ENCODE measurements at regions of chr13 and their contacts with region 1.

Region 1: GRCh38 chr13:111474136-111475002 is 153.9 kb downstream of the TEX29 start:
- DNase-seq: peak in 2 of 4 donors; percentile 34 to 54
- ATAC-seq: peak; percentile 84
- H3K4me3 ChIP-seq: no peak overlapping the region
- H3K27ac ChIP-seq: no peak overlapping the region
- H3K4me1 ChIP-seq: no peaks in the 10 kb centered on the region
- H3K27me3 ChIP-seq: peaks cover 0 to 23% of the 10 kb centered on the region in 2 donors
- CTCF ChIP-seq: peak; percentile 27 to 38

Region 2: GRCh38 chr13:111630406-111630805 is 156.0 kb after region 1 on chr13:
- intact Hi-C with region 1: no loop called
- DNase-seq: no peak
- ATAC-seq: no peak
- H3K4me3 ChIP-seq: no peak overlapping the region
- H3K27ac ChIP-seq: no peak overlapping the region
- H3K4me1 ChIP-seq: no peaks in the 10 kb centered on the region
- H3K27me3 ChIP-seq: peaks cover 0 to 43% of the 10 kb centered on the region in 2 donors
- CTCF ChIP-seq: no peak

Region 3: DNA sequence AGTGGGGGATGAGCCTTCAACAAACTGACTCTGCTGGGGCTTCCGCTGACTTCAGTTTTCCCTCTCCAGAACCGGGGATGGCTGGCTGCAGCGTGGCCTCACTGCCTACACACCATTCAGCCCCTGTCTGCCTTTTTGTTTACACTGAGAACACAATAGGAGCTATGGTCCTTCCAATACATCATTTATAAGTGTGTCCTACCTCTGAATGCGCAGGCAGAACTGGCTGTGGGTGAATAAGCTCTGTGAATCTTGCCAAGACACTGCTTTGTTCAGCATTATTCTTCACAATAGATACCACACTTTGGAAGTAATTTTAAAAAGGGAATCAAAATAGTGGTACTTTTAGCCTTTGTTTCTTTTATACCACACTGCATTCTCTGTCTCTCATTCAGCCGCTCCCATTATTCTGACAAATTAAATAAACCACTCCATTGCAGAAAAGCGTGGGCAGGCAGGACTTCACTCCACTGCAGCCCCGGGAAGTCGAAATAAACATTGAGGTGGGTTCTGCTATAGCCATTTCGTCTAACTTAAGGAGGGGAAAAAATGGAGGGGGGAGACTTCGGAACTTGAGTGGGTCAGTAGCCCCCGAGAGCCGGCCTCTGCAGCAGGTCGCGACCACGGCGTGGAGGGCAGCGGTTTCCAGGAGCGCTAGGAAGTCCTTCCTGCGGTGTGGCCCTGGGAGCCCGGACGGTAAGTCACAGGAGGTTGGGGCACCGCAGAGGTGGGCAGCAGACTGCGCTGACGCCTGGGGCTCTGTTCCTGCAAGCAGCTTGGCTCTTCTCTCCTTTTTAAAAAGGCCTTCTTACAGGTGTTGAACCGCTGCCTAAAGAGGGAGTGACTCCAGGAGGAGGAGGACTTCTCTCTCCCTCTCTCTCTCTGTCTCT is 497.8 kb after region 1 on chr13:
- intact Hi-C with region 1: no loop called
- DNase-seq: no peak
- ATAC-seq: no peak
- H3K4me3 ChIP-seq: no peak overlapping the region
- H3K27ac ChIP-seq: no peak overlapping the region
- H3K4me1 ChIP-seq: no peaks in the 10 kb centered on the region
- H3K27me3 ChIP-seq: peaks cover 20 to 86% of the 10 kb centered on the region in 2 donors
- CTCF ChIP-seq: no peak

Region 4: DNA sequence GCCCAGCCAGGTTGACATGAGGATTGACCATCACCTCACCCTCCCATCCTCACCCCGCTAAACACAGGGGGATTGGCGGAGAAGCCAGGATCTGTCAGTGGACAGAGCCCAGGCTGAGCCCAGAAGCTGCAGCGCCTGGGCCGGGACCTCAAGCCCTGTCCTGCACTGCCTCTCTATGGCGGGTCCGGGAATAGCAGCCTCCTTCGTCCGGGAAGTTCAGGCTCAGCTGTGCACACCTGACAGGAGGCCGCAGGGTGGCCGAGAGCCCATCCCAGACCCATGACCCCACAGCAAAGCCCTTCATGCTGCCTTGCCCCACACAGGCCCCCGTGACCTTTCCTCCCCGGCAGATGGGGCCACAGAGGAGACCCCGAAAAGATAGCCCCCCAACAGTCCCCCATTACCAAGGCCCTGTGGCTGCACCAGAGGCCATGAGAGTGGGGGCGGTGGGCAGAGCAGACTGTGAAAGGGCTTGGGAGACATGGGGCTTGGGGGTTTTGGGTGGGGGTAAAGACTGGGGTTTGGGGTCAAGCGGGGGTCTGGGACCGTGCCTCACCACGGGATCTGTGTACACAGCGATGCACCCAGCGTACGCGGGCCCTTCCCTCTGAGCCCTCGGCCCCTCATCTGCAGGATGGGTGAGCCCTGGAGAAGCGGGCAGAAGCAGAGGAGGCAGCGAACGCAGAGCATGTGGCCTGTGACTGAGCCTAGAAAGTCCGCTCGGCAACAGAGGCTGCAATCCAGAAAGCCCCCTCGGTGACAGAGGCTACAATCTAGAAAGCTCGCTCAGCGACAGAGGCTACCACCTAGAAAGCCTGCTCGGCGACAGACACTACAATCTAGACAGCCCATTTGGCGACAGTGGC is 969.9 kb after region 1 on chr13:
- intact Hi-C with region 1: loop called in 1 of 2 experiments (anchors 10 kb)
- DNase-seq: peak in 3 of 4 donors; percentile 49 to 84 (median 77)
- ATAC-seq: peak; percentile 97
- H3K4me3 ChIP-seq: no peak overlapping the region
- H3K27ac ChIP-seq: no peak overlapping the region
- H3K4me1 ChIP-seq: no peaks in the 10 kb centered on the region
- H3K27me3 ChIP-seq: peaks cover 14 to 77% of the 10 kb centered on the region in 2 donors
- CTCF ChIP-seq: peak; percentile 72 to 78

Measured in left lung (tissue), 14 donors.